Activated naive CD4-positive, alpha-beta T cell treated with anti-CD3 and anti-CD28 coated beads for 36 hours (primary cell): ENCODE measurements at regions of chr3 and their contacts with region 1.

Region 1: GRCh38 chr3:113912552-113913236 is 35.1 kb upstream of the ZDHHC23 start:
- DNase-seq: peak; percentile 55
- H3K4me3 Mint-ChIP-seq: no peak overlapping the region
- H3K27ac Mint-ChIP-seq: no peak overlapping the region
- H3K4me1 Mint-ChIP-seq: peaks cover 3% of the 10 kb centered on the region
- H3K27me3 Mint-ChIP-seq: no peaks in the 10 kb centered on the region

Region 2: DNA sequence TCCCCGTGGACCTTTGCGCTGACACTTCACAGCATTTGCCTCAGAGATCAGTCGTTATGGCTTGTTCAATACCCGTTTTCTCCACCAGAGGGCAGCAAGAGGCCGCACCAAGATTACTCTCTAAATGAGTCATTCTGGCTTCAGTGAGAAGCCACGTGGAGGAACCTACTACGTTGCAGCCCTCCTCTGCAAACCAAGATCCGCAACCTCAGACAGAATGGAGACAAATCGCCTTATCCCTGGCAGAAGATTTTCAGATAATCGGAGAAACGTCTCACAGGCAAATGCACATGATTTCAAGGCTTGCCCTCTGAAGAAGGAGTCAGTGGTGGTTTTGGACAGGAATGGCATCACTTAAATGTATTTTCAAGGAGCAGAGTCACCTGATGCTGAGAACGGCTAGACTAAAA is 861.4 kb before region 1 on chr3:
- CTCF ChIA-PET with region 1: no interaction called
- intact Hi-C with region 1: loop called (anchors 2 kb)
- DNase-seq: peak; percentile 96
- H3K4me3 Mint-ChIP-seq: no peak overlapping the region
- H3K27ac Mint-ChIP-seq: no peak overlapping the region
- H3K4me1 Mint-ChIP-seq: peaks cover 12% of the 10 kb centered on the region
- H3K27me3 Mint-ChIP-seq: no peaks in the 10 kb centered on the region

Region 3: DNA sequence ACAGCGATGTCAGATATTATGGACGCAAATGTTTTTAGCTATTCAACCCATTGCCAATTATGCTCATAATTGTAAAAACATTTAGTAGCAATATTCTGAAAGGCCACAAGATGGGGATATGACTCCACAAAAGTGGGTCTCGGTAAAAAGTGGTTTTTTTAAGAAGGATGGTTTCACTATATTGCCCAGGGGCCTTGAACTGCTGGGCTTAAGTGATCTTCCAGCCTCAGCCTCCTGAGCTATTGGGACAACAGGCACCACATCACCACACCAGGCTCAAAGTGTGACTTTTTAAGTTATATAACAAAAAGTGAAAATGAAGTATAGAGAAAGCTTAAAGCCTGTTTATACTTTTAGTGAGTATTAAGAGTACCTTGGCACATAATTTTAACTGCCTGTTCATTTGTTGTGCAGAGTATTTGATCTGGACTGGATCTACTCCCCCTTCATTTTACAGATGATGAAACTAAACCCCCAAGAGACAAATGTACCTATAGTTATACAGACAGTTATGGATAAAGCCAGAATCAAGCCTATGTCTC is 176.1 kb before region 1 on chr3:
- CTCF ChIA-PET with region 1: interaction called, 6 read pairs
- intact Hi-C with region 1: loop called (anchors 1 kb)
- DNase-seq: no peak
- H3K4me3 Mint-ChIP-seq: no peak overlapping the region
- H3K27ac Mint-ChIP-seq: peak overlapping the region; percentile 56
- H3K4me1 Mint-ChIP-seq: peaks cover 65% of the 10 kb centered on the region
- H3K27me3 Mint-ChIP-seq: no peaks in the 10 kb centered on the region

Region 4: DNA sequence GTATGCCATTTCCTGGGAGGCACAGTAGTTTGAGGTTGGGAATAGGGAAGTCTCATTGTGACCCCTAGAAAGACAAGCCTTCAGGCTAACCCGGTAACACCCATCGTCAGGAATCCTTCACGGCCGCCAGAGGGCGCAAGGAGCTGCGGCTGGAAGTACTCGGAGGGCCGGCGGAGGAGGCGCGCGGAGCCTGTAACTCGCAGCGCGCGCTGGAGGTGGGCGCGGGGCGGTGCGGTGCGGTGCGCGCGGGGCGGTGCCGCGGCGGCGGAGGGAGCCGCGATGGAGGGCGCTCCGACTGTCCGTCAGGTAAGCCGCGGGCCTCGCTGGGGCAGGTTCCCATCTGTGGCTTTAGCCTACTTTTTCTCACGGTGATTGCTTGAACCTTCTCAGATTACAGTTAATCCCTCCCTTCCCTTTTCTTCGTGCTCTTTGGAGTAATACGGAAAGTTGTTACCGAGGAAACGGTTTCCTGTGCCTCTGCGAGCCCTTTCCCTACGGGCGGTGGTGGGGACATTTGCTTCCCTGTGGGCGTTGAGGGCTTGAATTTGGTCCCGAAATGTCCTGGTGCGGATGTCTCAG is 74.0 kb before region 1 on chr3 and contains the start of gene GRAMD1C:
- CTCF ChIA-PET with region 1: interaction called, 29 read pairs
- intact Hi-C with region 1: loop called (anchors 1 kb)
- DNase-seq: peak; percentile 89
- H3K4me3 Mint-ChIP-seq: peak within 1 kb of the TSS; percentile 75
- H3K27ac Mint-ChIP-seq: no peak within 1 kb of the TSS
- H3K4me1 Mint-ChIP-seq: peaks cover 6% of the 10 kb centered on the region
- H3K27me3 Mint-ChIP-seq: no peaks in the 10 kb centered on the region
- total RNA-seq, gene GRAMD1C: 0.67 to 1.3 TPM

Region 5: DNA sequence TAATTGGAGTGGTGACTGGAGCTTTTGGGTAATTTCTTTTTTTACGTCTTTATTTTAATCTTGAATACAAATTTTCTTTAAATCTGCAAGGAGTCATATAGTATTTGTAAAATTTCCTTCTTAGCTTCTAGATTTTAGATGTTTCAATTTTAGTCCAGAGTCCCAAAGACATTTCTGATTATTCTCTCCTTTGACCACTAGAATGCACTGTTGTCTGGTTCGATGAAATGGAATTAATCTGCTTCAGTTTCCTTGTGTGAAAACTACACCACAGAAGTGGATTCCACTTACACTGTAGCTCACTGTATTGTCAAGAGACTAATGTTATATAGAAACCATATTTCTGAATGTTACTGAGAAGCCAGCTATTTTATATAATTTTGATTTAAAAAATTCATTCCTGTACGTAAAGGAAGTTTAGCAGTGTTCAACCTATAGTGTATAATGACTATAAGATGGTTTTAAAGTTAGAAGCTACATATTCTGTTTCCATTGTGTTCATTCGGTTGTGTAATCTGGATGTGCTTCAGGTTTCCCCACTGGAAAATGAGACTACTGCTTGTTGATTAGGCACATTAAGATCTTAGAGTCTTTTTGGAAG is 68.0 kb before region 1 on chr3:
- CTCF ChIA-PET with region 1: interaction called, 29 read pairs
- intact Hi-C with region 1: loop called (anchors 1 kb)
- DNase-seq: no peak
- H3K4me3 Mint-ChIP-seq: no peak overlapping the region
- H3K27ac Mint-ChIP-seq: no peak overlapping the region
- H3K4me1 Mint-ChIP-seq: no peaks in the 10 kb centered on the region
- H3K27me3 Mint-ChIP-seq: no peaks in the 10 kb centered on the region